Right cardiac atrium (tissue), 5 donors: ENCODE measurements at regions of chr10 and their contacts with region 1.

Region 1: GRCh38 chr10:72364239-72364777 is 9.6 kb upstream of the DNAJB12 start:
- DNase-seq: peak; percentile 91 to 96 (median 94)
- ATAC-seq: peak; percentile 95
- H3K4me3 ChIP-seq: no peak overlapping the region
- H3K27ac ChIP-seq: peak overlapping the region; percentile 30
- H3K4me1 ChIP-seq: no peaks in the 10 kb centered on the region
- H3K27me3 ChIP-seq: no peaks in the 10 kb centered on the region

Region 2: GRCh38 chr10:72223743-72224101 is 140.6 kb before region 1 on chr10:
- intact Hi-C with region 1: no loop called
- DNase-seq: no peak
- ATAC-seq: peak; percentile 41 to 53
- H3K4me3 ChIP-seq: no peak overlapping the region
- H3K27ac ChIP-seq: peak overlapping the region; percentile 97
- H3K4me1 ChIP-seq: no peaks in the 10 kb centered on the region
- H3K27me3 ChIP-seq: no peaks in the 10 kb centered on the region

Region 3: DNA sequence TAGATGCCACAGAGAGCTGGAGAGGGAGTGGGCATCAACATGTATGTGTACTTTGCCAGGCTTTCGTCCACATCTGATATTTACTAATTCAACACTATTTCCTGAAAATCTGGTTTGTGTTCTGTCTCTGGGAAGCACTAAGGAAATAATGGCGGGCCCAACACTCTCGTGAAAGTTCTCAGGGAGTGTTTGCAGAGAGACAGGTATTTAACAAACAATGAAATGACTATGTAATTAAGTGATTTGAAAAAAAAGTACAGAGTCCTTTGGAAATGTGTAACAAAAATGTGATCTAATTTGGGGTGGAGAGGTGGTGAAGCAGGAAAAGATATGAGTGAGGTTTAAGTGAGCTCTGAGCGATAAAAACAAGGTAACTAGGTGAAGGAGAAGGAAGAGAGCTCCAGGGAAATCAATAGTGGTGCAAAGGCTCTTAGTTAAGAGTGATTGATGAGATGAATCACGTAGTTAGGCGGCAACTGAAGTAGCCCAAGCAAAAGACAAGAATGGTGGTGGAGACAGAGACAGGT is 85.7 kb after region 1 on chr10:
- intact Hi-C with region 1: no loop called
- DNase-seq: no peak
- ATAC-seq: no peak
- H3K4me3 ChIP-seq: no peak overlapping the region
- H3K27ac ChIP-seq: no peak overlapping the region
- H3K4me1 ChIP-seq: no peaks in the 10 kb centered on the region
- H3K27me3 ChIP-seq: no peaks in the 10 kb centered on the region

Region 4: DNA sequence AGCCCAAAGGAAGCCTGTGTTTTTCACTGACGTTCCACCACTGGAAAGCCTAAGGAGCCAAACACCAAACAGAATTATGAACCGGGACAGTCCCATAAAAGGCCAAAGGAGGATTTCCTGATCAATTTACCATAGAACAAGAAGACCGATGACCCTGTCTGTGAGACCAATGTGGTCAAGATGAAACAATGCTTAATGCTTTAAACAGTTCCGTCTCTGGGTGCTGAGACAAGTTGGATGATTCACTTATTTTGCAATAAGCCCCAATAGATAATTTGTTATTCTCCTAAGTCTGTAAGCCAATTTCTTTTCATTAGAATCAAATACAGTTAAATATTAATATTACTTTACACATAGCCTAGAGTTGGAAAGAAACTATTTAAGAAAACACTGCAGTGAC is 126.6 kb after region 1 on chr10:
- intact Hi-C with region 1: no loop called
- DNase-seq: no peak
- ATAC-seq: no peak
- H3K4me3 ChIP-seq: no peak overlapping the region
- H3K27ac ChIP-seq: no peak overlapping the region
- H3K4me1 ChIP-seq: no peaks in the 10 kb centered on the region
- H3K27me3 ChIP-seq: no peaks in the 10 kb centered on the region

Region 5: DNA sequence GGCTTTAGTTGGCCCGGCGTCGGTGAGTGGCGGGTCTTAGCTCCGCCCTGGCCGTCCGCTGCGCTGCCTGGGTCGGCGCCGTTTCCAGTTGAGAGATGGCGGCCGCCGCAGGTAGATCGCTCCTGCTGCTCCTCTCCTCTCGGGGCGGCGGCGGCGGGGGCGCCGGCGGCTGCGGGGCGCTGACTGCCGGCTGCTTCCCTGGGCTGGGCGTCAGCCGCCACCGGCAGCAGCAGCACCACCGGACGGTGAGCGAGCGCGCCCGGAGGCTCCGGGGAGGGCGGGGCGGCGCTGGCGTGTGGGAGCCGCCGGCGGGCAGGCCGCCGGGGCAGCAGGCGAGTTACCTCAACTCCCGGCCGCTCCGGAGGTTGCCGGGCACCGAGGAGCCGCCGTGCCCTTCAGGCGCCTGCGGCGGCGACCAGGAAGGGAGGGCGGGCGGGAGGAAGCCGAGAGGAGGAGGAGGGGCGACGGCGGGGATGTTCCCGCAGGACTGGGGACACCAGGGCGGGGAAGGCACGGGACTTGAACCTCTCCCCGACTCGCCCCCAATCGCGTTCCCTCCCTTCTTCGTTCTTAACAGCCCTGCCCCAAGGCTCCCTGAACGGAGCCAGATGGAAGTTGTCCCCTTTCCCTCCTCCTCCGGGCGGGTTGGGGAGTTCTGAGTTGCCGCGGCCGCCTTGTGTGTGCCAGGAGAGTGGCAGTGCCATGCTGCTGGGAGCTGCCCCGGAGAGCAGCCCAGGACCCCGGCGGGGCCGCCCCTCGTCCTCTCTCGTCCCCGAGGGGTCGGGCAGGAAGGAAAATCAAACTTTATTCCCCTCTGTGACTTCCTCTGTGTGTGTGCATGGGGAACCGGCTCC is 328.0 kb after region 1 on chr10 and contains the start of gene MCU:
- intact Hi-C with region 1: loop called in 1 of 4 experiments (anchors 10 kb)
- DNase-seq: peak; percentile 95 to 98 (median 97)
- ATAC-seq: peak; percentile 96 to 98
- H3K4me3 ChIP-seq: peak within 1 kb of the TSS; percentile 92
- H3K27ac ChIP-seq: peak within 1 kb of the TSS; percentile 97
- H3K4me1 ChIP-seq: no peaks in the 10 kb centered on the region
- H3K27me3 ChIP-seq: no peaks in the 10 kb centered on the region
- total RNA-seq, gene MCU: 17.7 to 22.1 (median 18.8) TPM

Region 6: DNA sequence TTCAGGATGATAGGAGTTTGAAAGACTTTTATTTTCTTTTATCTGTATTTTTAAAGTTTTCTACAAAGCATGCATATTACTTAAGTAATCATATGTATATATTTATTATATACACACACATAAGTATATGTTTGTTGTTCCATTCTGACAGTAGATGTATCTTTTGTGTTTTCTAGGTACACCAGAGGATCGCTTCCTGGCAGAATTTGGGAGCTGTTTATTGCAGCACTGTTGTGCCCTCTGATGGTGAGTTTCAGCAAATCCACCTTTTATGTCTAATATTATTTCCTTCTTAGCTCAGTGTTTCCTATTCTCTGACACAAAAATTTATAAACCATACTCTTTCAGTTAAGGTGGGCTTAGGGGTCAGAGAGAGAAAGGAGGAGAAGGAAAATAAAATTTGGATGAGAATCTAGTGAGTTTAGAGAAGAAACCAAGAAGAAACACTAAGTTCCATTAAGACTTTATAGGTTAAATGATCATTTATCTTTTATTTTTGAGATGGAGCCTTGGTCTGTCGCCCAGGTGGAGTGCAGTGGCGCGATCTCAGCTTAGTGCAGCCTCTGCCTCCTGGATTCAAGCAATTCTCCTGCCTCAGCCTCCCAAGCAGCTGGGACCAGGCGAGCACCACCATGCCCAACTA is 470.0 kb after region 1 on chr10:
- intact Hi-C with region 1: loop called (anchors 2 to 10 kb)
- DNase-seq: no peak
- ATAC-seq: peak; percentile 59 to 76
- H3K4me3 ChIP-seq: no peak overlapping the region
- H3K27ac ChIP-seq: no peak overlapping the region
- H3K4me1 ChIP-seq: no peaks in the 10 kb centered on the region
- H3K27me3 ChIP-seq: no peaks in the 10 kb centered on the region

Region 7: DNA sequence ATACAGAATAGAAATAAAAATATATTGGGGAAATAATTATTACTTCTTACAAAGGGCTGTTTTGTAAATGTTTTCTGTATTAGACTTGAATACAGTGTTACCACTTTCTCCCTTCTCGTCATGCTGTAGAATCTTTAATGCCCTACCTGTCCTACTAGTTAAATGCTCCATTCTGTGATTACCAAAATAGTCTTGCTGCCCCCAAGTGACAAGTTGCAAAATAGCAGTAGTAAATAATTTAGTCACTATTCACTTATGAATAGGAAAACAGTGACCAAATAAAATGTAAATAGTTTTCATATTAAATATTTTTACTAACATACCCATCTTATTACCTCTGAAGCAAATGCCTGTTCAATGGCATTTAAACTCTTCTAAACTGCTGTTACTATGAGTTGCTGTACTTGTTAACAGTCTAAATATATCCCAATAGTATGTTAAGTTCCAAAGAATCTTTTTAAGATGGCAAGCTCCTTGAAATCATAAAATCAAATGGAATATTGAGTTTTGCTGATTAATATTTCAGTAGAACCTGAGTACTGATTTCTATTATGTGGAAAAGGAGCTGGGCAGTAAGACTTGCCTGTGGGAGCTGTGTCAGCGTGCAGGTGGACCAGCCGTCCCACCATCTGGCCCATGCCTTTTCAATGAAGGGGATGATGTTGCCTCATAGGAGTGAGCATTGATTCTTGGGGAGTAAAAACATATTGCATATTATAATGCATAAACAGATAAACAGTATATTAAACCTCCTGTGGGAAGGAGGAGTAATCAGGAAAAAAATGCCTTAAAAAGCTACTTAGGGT is 511.1 kb after region 1 on chr10:
- intact Hi-C with region 1: loop called in 3 of 4 experiments (anchors 10 kb)
- DNase-seq: no peak
- ATAC-seq: no peak
- H3K4me3 ChIP-seq: no peak overlapping the region
- H3K27ac ChIP-seq: no peak overlapping the region
- H3K4me1 ChIP-seq: no peaks in the 10 kb centered on the region
- H3K27me3 ChIP-seq: no peaks in the 10 kb centered on the region

Region 8: DNA sequence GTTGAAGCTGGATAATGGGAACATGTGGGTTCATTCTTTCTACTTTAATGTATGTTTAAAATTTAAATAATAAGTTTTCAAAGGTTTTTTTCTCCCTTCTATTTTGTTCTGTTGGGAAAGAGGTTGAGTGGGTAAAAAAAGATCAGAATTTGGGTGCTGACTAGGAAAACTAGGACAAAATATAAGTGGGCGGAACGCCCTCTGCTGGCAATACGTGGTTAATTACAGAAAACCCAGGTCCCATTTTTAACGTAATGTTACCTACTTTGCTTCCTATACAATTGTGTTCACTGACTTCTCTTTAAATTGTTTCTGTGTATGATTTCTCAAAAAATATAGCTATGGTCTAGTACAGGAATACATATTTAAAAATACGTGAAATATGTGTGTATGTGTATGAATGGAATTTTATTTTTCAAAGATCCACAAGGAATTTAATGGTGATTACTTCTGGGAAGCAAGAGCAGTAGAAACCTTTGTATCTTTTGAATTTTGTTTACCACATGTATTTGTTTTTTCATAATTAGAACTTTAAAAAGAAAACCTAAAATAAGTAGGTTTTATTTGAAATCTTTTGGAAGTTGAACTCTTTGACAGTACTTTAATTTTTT is 794.8 kb after region 1 on chr10:
- intact Hi-C with region 1: loop called in 1 of 4 experiments (anchors 10 kb)
- DNase-seq: peak in 2 of 3 donors; percentile 46 to 71
- ATAC-seq: no peak
- H3K4me3 ChIP-seq: no peak overlapping the region
- H3K27ac ChIP-seq: no peak overlapping the region
- H3K4me1 ChIP-seq: no peaks in the 10 kb centered on the region
- H3K27me3 ChIP-seq: no peaks in the 10 kb centered on the region